ENCODE measurements at regions of chr5 and their contacts with region 1.

Region 1: GRCh38 chr5:177311723-177312648 is at the start of gene MXD3:
- DNase-seq: peak; percentile 99
- H3K4me3 Mint-ChIP-seq: peak within 1 kb of the TSS; percentile 100
- H3K27ac Mint-ChIP-seq: peak within 1 kb of the TSS; percentile 94
- H3K4me1 Mint-ChIP-seq: peaks cover 57% of the 10 kb centered on the region
- H3K27me3 Mint-ChIP-seq: no peaks in the 10 kb centered on the region

Region 2: GRCh38 chr5:176774216-176775170 is 537.5 kb before region 1 on chr5:
- CTCF ChIA-PET with region 1: no interaction called
- DNase-seq: no peak
- H3K4me3 Mint-ChIP-seq: no peak overlapping the region
- H3K27ac Mint-ChIP-seq: no peak overlapping the region
- H3K4me1 Mint-ChIP-seq: no peaks in the 10 kb centered on the region
- H3K27me3 Mint-ChIP-seq: peaks cover 33% of the 10 kb centered on the region

Region 3: GRCh38 chr5:177212242-177212641 is 99.7 kb before region 1 on chr5:
- CTCF ChIA-PET with region 1: no interaction called
- DNase-seq: no peak
- H3K4me3 Mint-ChIP-seq: no peak overlapping the region
- H3K27ac Mint-ChIP-seq: peak overlapping the region; percentile 55
- H3K4me1 Mint-ChIP-seq: no peaks in the 10 kb centered on the region
- H3K27me3 Mint-ChIP-seq: no peaks in the 10 kb centered on the region

Region 4: GRCh38 chr5:177293819-177294218 is 18.2 kb before region 1 on chr5:
- CTCF ChIA-PET with region 1: interaction called, 27 read pairs
- DNase-seq: no peak
- H3K4me3 Mint-ChIP-seq: no peak overlapping the region
- H3K27ac Mint-ChIP-seq: no peak overlapping the region
- H3K4me1 Mint-ChIP-seq: peaks cover 37% of the 10 kb centered on the region
- H3K27me3 Mint-ChIP-seq: no peaks in the 10 kb centered on the region

Region 5: DNA sequence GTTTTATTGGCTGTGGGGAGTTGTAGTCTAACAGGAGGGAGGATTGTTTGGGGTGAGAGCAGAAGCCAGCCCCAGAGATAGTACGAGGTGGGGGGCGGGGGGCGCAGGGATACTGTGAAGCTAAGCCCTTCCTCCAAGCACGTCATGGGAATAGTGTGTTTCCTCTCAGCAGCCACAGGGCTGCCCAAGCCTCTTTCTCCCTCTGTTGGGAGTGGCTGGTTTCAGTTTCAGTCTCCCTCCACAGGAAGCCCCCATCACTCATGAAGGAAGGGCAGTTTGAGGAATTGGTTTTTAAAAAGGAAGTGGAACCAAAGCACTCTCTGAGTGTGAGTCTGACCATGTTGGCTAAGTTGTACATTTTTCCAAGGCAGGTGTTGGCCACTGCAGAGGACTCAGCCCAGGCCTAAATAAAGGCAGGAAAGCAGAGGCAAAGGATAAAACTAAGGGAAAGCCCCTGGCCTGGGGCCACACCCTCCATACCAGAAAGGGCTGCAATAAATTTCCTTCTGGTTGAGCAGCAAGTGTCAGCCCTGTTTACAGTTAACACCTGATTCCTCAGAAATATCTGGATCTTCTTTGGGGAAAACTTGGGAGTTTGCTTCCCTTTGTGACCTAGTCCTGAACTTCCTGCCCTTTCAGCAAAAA is 11.6 kb before region 1 on chr5:
- CTCF ChIA-PET with region 1: interaction called, 27 read pairs
- DNase-seq: peak; percentile 80
- H3K4me3 Mint-ChIP-seq: peak overlapping the region; percentile 66
- H3K27ac Mint-ChIP-seq: peak overlapping the region; percentile 96
- H3K4me1 Mint-ChIP-seq: peaks cover 85% of the 10 kb centered on the region
- H3K27me3 Mint-ChIP-seq: no peaks in the 10 kb centered on the region

Region 6: DNA sequence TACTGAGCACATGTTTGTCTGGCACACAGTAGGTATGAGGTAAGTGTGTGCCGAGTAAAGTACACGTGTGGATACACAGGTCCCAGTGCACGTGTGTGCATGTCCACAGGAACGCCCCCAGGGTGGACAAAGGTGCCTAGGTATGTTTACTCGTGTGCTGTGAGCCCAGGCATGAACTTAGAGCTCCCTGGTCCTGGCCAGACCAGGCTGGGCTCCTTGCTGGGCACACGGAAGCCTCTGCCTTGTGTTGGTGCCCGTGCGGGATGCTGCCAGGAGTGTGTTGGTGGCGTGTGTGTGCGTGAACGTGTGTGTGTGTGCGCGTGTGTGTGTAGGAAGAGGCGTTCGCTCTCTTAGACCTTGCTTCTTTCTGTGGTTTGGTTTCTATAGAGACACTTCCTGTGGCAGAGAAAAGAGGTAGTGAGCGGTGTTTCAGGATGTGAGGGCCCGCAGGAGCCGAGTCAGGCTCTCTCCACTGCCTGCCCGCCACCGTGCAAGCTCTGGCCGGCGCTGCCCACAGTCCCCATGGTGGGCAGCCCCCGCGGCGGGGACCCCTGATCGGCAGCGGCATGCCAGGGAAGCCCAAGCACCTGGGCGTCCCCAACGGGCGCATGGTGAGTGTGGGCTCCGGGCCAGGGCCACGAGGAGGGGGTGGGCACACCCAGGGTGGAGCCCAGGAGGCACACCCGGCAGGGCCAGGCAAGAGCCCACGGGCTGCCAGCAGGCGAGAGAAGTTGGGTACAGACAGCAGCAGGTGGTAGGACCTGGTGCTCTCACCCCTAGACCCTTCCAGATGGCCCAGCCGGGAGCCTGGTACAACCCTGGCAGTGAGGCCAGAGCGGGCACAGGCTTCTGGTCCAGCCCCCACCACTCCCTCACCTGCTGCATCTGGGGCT is 45.7 kb after region 1 on chr5 and contains the start of gene RGS14:
- CTCF ChIA-PET with region 1: interaction called, 13 read pairs
- DNase-seq: peak; percentile 82
- H3K4me3 Mint-ChIP-seq: peak within 1 kb of the TSS; percentile 93
- H3K27ac Mint-ChIP-seq: peak within 1 kb of the TSS; percentile 75
- H3K4me1 Mint-ChIP-seq: peaks cover 83% of the 10 kb centered on the region
- H3K27me3 Mint-ChIP-seq: no peaks in the 10 kb centered on the region

Region 7: GRCh38 chr5:177370488-177371119 is 58.6 kb after region 1 on chr5:
- CTCF ChIA-PET with region 1: interaction called, 13 read pairs
- DNase-seq: peak; percentile 82
- H3K4me3 Mint-ChIP-seq: peak overlapping the region; percentile 62
- H3K27ac Mint-ChIP-seq: peak overlapping the region; percentile 33
- H3K4me1 Mint-ChIP-seq: peaks cover 77% of the 10 kb centered on the region
- H3K27me3 Mint-ChIP-seq: no peaks in the 10 kb centered on the region

Region 8: GRCh38 chr5:177454397-177455035 is 142.5 kb after region 1 on chr5:
- CTCF ChIA-PET with region 1: interaction called, 17 read pairs
- DNase-seq: peak; percentile 92
- H3K4me3 Mint-ChIP-seq: peak overlapping the region; percentile 80
- H3K27ac Mint-ChIP-seq: peak overlapping the region; percentile 84
- H3K4me1 Mint-ChIP-seq: peaks cover 29% of the 10 kb centered on the region
- H3K27me3 Mint-ChIP-seq: peaks cover 44% of the 10 kb centered on the region

Region 9: GRCh38 chr5:177497292-177498033 is 185.5 kb after region 1 on chr5 and contains the start of gene PDLIM7:
- CTCF ChIA-PET with region 1: interaction called, 25 read pairs
- DNase-seq: peak; percentile 95
- H3K4me3 Mint-ChIP-seq: peak within 1 kb of the TSS; percentile 81
- H3K27ac Mint-ChIP-seq: no peak within 1 kb of the TSS
- H3K4me1 Mint-ChIP-seq: peaks cover 36% of the 10 kb centered on the region
- H3K27me3 Mint-ChIP-seq: peaks cover 32% of the 10 kb centered on the region